Left ventricle myocardium inferior (tissue), 1 donor: ENCODE measurements at regions of chr7 and their contacts with region 1.

Region 1: DNA sequence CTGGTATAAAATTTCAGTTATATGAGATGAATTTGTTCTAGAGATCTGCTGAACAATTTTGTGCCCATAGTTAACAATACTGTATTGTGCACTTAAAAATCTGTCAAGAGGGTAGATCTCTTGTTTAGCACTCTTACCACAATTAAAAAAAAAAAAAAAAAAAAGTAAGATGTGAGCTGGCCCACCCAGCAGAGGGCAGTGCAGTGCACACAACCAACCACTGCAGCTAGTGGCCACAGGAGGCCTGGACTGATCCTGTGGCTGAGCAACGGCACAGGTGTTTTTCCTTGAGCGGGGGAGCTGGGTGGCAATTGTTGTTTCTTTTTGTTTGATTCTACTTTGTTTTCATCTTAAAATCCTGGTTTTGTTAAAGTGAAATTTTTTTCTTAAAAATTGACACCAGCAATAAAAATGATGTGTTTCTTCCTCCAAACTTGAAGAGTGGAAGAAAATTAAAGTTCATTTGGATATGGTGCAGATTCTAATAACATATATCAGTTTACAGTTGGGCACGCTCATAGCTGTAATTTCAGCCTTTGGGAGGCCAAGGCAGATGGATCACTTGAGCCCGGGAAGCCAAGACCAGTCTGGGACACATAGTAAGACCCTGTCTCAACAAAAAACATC is 171.1 kb upstream of the TBX20 start:
- DNase-seq: peak; percentile 59
- H3K4me3 ChIP-seq: no peak overlapping the region
- H3K27ac ChIP-seq: no peak overlapping the region
- H3K4me1 ChIP-seq: peaks cover 19% of the 10 kb centered on the region
- H3K27me3 ChIP-seq: no peaks in the 10 kb centered on the region
- CTCF ChIP-seq: peak; percentile 78

Region 2: GRCh38 chr7:35519971-35520809 is 95.2 kb after region 1 on chr7:
- intact Hi-C with region 1: loop called (anchors 5 kb)
- DNase-seq: peak; percentile 77
- H3K4me3 ChIP-seq: no peak overlapping the region
- H3K27ac ChIP-seq: peak overlapping the region; percentile 43
- H3K4me1 ChIP-seq: peaks cover 27% of the 10 kb centered on the region
- H3K27me3 ChIP-seq: peaks cover 4% of the 10 kb centered on the region
- CTCF ChIP-seq: peak; percentile 92

Region 3: GRCh38 chr7:35624299-35625186 is 199.6 kb after region 1 on chr7:
- intact Hi-C with region 1: loop called (anchors 10 kb)
- DNase-seq: no peak
- H3K4me3 ChIP-seq: no peak overlapping the region
- H3K27ac ChIP-seq: no peak overlapping the region
- H3K4me1 ChIP-seq: peaks cover 6% of the 10 kb centered on the region
- H3K27me3 ChIP-seq: no peaks in the 10 kb centered on the region
- CTCF ChIP-seq: peak; percentile 88